Panc1 (cell line): ENCODE measurements at regions of chr9 and their contacts with region 1.

Region 1: GRCh38 chr9:93860694-93861658 is 94.2 kb downstream of the BARX1 start:
- DNase-seq: no peak
- ATAC-seq: no peak
- H3K4me3 ChIP-seq: no peak overlapping the region
- H3K27ac ChIP-seq: no peak overlapping the region
- H3K4me1 ChIP-seq: no peaks in the 10 kb centered on the region
- H3K27me3 ChIP-seq: no peaks in the 10 kb centered on the region; the same call in 1 of the 2 replicates
- CTCF ChIP-seq: no peak

Region 2: DNA sequence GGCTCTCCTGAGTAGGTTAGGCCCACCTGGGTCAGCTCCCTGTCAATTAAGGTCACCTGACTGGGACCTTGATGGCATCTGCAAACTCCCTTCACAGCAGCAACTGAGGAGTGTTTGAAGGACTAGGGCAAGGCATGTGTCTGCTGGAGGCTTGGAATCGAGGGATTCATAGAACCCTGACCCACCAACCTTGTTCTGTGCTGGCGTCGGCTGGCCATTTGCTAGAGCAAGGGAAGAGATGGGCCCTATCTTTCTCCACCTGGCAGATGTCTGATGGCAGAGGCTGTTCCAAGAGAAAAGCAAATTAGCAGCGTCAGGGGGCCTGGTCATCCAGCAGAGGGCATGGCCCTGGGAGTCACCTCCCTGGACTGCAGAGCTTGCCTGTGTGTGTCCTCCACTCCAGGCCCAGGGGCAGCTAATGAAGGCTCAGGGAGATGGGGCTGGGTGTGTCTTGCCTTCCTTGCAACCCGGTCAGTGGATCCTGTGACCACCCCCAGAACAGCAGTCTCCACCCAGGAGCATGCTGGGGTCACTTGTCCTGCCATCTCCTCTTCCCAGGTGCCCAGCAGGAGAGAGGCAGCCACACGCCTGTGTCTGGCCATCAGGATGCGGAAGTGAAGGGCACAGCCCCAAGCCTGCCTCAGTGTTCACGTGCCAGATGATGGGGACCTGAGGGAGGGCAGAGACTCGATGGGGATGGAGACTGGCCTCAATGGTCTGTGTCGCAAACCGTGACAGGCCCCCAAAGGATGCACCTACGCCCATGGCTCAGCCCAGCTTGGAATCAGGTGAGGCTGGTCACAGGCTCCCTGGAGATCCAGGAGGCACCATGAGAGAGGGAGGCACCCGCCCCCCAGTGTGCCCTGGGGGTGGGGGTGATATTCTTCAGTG is 40.2 kb after region 1 on chr9:
- CTCF ChIA-PET with region 1: interaction called, 11 read pairs
- POLR2A ChIA-PET with region 1: no interaction called
- in situ Hi-C with region 1: no loop called
- intact Hi-C with region 1: no loop called
- DNase-seq: no peak
- ATAC-seq: no peak
- H3K4me3 ChIP-seq: no peak overlapping the region
- H3K27ac ChIP-seq: no peak overlapping the region
- H3K4me1 ChIP-seq: no peaks in the 10 kb centered on the region
- H3K27me3 ChIP-seq: no peaks in the 10 kb centered on the region
- CTCF ChIP-seq: no peak

Region 3: DNA sequence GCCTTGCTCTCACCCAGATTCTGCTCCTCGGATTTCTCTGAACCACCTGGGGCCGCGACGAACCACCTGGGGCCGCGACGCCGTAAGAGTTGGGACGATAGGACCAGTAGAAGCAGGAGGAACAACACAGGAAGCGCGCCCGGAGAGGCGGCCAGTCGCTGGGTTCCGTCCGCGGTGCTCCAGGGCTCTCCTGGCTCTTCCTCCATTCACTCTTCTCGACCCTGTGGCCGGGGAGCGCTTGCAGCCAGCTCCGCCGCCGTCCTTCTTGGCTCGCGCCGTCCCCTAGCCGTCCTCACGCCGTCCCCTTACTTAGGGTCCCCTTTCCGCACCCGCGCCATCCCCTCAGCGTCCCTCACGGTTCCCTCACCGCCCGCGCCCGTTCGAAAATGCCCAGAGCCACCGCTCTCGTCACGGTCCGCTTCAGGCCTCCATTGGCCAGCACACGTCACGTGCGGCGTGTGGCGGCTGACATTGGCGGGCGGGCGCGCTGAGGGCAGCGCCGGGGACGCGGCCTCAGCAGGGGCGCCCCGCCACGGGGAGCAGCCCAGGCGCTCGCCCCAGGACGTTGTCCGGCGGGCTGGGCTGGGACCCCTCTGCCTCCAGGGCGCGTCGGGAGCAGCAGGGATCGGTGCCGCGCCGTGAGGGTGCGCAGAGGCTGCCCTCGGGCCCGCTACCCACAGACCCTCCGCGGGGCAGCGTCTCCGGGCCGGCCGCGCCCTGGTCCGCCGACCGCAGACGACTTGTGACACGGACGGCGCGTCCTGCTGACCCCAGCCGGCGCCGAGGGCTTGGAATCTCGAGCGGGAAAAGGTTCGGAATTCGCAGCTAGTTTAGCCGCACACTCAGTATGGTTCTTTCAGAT is 169.6 kb after region 1 on chr9:
- CTCF ChIA-PET with region 1: no interaction called
- POLR2A ChIA-PET with region 1: no interaction called
- in situ Hi-C with region 1: no loop called
- intact Hi-C with region 1: no loop called
- DNase-seq: no peak
- ATAC-seq: peak; percentile 99
- H3K4me3 ChIP-seq: peak overlapping the region; percentile 83 to 91
- H3K27ac ChIP-seq: peak overlapping the region; percentile 91
- H3K4me1 ChIP-seq: peaks cover 6% of the 10 kb centered on the region
- H3K27me3 ChIP-seq: no peaks in the 10 kb centered on the region
- CTCF ChIP-seq: no peak